ENCODE measurements at regions of chr7 and their contacts with region 1.

Region 1: DNA sequence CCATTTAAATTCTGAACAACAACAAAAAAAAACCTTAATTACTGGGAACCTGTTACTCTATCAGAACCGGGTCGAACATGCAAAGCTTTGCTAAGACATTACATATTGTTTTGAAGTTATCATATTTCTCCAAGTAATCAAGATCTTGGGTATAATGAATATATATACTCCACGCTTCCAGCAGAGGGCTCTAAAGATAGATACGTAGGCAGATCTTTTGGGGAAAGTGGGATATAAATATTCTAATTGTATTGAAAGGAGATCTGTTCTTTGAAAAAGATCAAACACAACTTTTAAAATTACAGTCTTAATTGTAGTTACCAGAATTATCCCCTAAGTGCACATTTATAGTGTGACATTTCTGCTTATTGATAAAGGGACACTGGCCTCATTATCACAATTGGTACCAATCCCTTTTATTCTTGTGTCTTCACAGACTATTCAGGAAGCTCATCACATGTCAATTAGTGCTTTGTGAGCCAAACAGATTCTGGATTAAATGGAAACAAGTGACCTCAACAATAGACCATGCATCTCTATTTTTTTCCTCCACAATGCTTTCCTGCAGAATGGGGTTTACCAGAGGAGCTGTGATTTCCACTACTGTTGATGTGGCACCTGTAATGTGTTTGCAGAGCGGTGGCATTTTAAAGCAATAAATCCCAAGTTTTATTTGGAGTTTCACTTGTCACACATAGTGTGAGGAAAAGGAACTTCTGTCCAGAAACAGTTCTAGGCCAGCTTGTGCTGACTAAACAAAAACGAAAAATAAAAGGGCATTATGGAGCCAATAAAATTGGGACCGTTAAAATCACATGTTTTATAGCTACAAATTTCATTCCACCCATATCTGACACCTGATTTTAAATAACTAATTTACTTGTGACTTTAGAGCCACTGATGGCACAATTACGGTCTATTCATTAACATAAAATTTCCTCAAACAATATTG is 122.4 kb downstream of the CTTNBP2 start:
- DNase-seq: no peak
- ATAC-seq: no peak
- H3K4me3 ChIP-seq: no peak overlapping the region
- H3K27ac ChIP-seq: no peak overlapping the region
- H3K4me1 ChIP-seq: peaks cover 0 to 11% (median 0%) of the 10 kb centered on the region in 12 donors
- H3K27me3 ChIP-seq: no peaks in the 10 kb centered on the region
- CTCF ChIP-seq: peak; percentile 31 to 73 (median 49)
- POLR2A ChIP-seq: no peak

Region 2: GRCh38 chr7:117873310-117874190 is 122.7 kb after region 1 on chr7 and contains the start of gene CTTNBP2:
- intact Hi-C with region 1: loop called in 8 of 10 experiments (anchors 2 to 10 kb)
- DNase-seq: peak; percentile 45 to 77 (median 56)
- ATAC-seq: peak; percentile 35 to 89 (median 70)
- H3K4me3 ChIP-seq: peak within 1 kb of the TSS; percentile 60 to 95 (median 80)
- H3K27ac ChIP-seq: peak within 1 kb of the TSS in 7 of 12 donors; percentile 8 to 70 (median 61)
- H3K4me1 ChIP-seq: peaks cover 0 to 20% (median 0%) of the 10 kb centered on the region in 12 donors
- H3K27me3 ChIP-seq: peaks cover 0 to 51% (median 0%) of the 10 kb centered on the region in 9 donors
- CTCF ChIP-seq: peak in 3 of 12 donors; percentile 21 to 30 (median 22)
- POLR2A ChIP-seq: no peak
- total RNA-seq, gene CTTNBP2: 0.31 to 3.9 (median 0.95) TPM

Region 3: DNA sequence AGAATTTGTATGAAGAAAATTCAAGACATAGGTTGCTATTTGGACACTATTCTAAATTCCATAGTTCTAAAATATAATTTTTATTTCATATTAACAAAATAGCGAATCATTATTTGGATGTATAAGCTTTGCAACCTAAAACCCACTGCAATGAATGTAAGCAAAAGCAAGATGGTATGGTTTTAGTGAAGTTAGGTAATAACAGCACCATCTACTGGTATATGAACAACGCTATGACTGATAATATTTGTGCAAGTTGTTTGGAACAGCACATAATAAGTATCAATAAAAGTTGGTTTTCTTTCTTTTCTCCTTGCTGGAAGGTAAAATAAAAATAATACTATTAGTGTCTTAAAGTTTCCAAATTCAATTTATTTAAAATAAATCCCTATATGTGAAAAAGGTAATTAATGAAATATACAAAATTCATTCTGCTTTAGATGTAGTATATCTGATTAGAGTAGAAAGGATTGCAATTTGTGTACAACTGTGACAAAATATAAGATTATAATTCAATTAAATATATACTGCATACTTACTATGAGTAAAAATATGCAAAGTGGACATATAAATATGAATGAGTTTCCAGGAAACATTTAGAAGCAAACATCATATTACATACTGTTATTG is 354.0 kb after region 1 on chr7:
- intact Hi-C with region 1: loop called in 7 of 10 experiments (anchors 5 to 10 kb)
- DNase-seq: no peak
- ATAC-seq: no peak
- H3K4me3 ChIP-seq: no peak overlapping the region
- H3K27ac ChIP-seq: no peak overlapping the region
- H3K4me1 ChIP-seq: no peaks in the 10 kb centered on the region
- H3K27me3 ChIP-seq: no peaks in the 10 kb centered on the region
- CTCF ChIP-seq: peak; percentile 19 to 62 (median 42)
- POLR2A ChIP-seq: no peak

Region 4: DNA sequence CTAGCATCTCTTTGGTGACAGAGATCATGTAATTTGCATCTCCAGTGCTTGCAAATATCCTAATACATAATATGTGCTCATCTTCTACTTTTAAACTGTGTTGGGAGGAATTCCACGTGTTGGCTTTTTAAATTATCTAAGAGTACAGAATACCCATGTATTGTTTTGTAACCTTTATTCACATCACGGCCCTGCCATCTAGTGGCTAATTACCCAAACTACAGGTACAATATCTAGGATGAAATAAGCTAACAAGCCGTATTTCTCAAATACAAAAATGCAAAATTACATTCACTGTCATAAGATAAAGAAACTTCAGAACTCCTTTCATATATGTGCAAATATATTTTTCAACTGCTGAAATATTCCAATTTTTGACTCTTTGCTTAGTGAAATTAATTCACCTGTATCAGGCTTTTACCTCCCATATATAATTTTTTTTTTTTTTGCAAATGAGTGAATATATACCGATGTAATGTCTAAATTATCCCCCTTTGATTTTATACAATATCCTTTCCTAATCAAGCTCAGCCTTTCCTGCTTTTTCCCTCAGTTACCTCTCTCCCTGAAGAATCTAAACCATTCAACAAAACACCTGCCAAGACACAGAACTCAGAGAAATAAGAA is 402.8 kb after region 1 on chr7:
- intact Hi-C with region 1: loop called in 4 of 10 experiments (anchors 5 to 10 kb)
- DNase-seq: no peak
- ATAC-seq: no peak
- H3K4me3 ChIP-seq: no peak overlapping the region
- H3K27ac ChIP-seq: no peak overlapping the region
- H3K4me1 ChIP-seq: peaks cover 0 to 5% (median 0%) of the 10 kb centered on the region in 12 donors
- H3K27me3 ChIP-seq: peaks cover 0 to 4% (median 0%) of the 10 kb centered on the region in 9 donors
- CTCF ChIP-seq: peak; percentile 49 to 74 (median 64)
- POLR2A ChIP-seq: no peak

Region 5: DNA sequence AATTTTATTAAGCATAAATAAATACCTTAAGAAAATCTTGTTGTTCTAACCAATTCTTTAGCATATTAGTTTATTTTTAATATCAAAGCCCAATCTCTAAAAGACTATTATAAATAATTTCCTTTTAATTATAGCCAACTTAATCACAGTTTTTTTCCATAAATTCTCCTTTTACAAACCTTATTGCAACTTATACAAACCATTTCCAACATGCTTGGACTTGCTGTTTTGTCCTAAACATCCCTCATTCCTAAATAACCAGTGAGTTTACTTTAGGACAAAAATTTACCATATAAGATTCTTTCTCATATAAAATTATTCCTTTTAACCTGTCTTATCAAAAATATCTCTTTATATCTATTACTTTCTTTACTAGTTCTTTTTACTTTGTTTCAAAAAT is 407.9 kb after region 1 on chr7:
- intact Hi-C with region 1: loop called in 4 of 10 experiments (anchors 5 to 10 kb)
- DNase-seq: no peak
- ATAC-seq: no peak
- H3K4me3 ChIP-seq: no peak overlapping the region
- H3K27ac ChIP-seq: no peak overlapping the region
- H3K4me1 ChIP-seq: no peaks in the 10 kb centered on the region
- H3K27me3 ChIP-seq: no peaks in the 10 kb centered on the region
- CTCF ChIP-seq: no peak
- POLR2A ChIP-seq: no peak

Region 6: DNA sequence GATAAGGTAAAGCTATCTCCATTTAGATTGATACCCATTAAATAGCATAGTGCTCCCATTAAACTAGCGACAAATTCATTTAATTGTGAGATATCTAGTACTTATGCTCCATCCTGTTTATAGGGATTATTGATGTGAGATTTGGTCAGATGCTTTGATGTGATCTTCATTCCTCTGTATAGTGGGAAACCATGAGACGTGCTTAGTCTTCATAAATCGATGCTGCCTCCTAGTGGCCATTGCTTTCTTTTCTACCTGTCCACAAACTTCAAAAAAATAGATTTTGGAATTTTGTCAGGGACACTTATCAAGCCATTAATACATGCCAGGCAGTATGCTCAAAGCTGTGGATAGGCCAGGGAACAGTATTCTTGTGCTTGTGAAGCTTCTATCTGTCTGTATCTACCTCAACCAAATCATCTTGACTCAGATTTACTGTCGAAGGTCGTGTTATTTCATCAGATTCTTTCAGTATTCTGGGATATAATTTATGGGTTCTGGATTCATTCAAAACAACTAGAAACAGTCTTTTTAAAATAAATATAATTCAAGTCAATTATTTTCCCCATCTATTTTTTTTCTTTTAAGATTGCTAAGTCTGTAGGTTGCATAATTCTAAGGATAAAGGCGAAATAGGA is 445.1 kb after region 1 on chr7:
- intact Hi-C with region 1: loop called in 1 of 10 experiments (anchors 5 kb)
- DNase-seq: peak in 2 of 5 donors; percentile 28 to 34
- ATAC-seq: peak in 2 of 4 donors; percentile 66 to 70
- H3K4me3 ChIP-seq: no peak overlapping the region
- H3K27ac ChIP-seq: no peak overlapping the region
- H3K4me1 ChIP-seq: no peaks in the 10 kb centered on the region
- H3K27me3 ChIP-seq: no peaks in the 10 kb centered on the region
- CTCF ChIP-seq: peak; percentile 55 to 78 (median 64)
- POLR2A ChIP-seq: no peak

Measured in heart left ventricle (tissue), 16 donors.